ENCODE measurements at regions of chr17 and their contacts with region 1.

Region 1: GRCh38 chr17:68319410-68320162 is 28.3 kb downstream of the ARSG start:
- DNase-seq: no peak
- H3K4me3 ChIP-seq: no peak overlapping the region
- H3K27ac ChIP-seq: no peak overlapping the region
- H3K4me1 ChIP-seq: no peaks in the 10 kb centered on the region
- H3K27me3 ChIP-seq: no peaks in the 10 kb centered on the region
- CTCF ChIP-seq: no peak
- POLR2A ChIP-seq: no peak

Region 2: DNA sequence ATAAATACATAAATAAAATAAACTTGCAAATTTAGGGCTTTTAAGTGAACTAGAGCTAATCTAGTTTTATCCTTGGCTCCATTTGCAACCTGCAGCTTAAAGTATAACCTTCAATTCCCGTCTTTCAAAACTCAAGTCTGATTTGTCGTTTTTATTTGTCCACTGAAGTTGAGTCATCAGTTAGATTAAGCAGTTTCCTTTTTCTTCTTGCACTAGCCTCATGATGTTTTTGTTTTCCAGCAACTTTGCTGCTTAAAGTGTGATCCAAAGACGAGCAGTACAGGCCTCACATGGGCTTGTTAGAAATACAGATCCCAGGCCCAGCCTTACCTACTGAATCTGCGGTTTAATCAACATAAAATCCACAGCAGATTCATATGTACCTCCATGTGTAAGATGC is 14.4 kb before region 1 on chr17:
- intact Hi-C with region 1: loop called (anchors 1 kb)
- DNase-seq: no peak
- H3K4me3 ChIP-seq: no peak overlapping the region
- H3K27ac ChIP-seq: no peak overlapping the region
- H3K4me1 ChIP-seq: no peaks in the 10 kb centered on the region
- H3K27me3 ChIP-seq: no peaks in the 10 kb centered on the region
- CTCF ChIP-seq: no peak
- POLR2A ChIP-seq: no peak

Measured in breast epithelium (tissue), 4 donors.